ENCODE measurements at regions of chr17 and their contacts with region 1.

Region 1: GRCh38 chr17:18033442-18034099 is 5.4 kb downstream of the ATPAF2 start:
- DNase-seq: peak; percentile 54 to 82
- H3K4me3 ChIP-seq: no peak overlapping the region
- H3K27ac ChIP-seq: no peak overlapping the region
- H3K4me1 ChIP-seq: peaks cover 30% of the 10 kb centered on the region
- H3K27me3 ChIP-seq: no peaks in the 10 kb centered on the region
- CTCF ChIP-seq: peak; percentile 89

Region 2: DNA sequence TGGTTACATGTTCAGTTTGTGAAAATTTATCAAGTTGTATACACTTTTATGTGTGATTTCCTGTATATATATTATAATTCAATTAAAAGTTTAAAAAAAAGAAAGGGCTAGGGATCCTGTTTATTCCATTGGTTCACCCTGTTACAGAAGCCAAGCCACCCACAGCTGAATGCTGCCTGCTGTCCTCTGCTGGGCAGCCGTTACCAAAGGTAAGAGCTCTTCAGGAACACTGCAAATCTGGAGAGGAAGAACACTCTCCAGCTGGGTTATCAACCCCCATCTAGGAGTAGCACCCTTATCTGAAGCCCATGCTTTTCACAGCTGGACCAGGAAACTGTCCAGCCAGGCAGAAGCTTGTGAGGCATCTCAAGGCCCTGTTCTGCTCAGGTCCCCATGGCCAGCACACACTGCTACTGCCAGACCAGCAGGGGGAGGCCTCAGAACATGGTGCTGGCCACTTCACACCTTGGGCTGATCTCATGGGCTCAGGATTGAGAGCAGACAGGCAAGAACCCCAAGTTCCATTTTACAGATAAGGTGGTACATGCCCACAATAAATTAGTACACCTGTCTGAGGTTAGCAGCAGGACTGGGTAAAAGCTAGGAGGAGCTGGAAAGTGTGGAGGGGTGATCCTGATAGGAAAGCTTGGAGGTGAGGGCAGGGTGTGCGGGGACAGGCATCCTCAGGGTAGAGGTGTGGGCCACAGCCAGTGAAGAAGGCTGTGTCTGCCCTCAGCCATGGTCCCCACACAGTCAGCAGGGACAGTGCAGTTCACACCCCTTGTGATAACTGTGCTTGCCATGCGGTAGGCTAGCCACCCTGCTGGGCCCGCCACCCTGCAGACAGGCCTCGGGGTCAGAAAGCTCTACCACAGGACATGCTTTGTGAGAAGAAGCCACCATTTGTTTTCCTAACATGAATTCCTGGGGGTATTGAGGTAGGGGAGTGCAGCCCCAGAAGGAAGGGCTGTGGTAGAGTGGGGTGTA is 142.5 kb before region 1 on chr17:
- CTCF ChIA-PET with region 1: no interaction called
- POLR2A ChIA-PET with region 1: no interaction called
- intact Hi-C with region 1: loop called (anchors 1 kb)
- DNase-seq: peak; percentile 57 to 71
- H3K4me3 ChIP-seq: no peak overlapping the region
- H3K27ac ChIP-seq: no peak overlapping the region
- H3K4me1 ChIP-seq: no peaks in the 10 kb centered on the region
- H3K27me3 ChIP-seq: no peaks in the 10 kb centered on the region
- CTCF ChIP-seq: peak; percentile 93

Region 3: DNA sequence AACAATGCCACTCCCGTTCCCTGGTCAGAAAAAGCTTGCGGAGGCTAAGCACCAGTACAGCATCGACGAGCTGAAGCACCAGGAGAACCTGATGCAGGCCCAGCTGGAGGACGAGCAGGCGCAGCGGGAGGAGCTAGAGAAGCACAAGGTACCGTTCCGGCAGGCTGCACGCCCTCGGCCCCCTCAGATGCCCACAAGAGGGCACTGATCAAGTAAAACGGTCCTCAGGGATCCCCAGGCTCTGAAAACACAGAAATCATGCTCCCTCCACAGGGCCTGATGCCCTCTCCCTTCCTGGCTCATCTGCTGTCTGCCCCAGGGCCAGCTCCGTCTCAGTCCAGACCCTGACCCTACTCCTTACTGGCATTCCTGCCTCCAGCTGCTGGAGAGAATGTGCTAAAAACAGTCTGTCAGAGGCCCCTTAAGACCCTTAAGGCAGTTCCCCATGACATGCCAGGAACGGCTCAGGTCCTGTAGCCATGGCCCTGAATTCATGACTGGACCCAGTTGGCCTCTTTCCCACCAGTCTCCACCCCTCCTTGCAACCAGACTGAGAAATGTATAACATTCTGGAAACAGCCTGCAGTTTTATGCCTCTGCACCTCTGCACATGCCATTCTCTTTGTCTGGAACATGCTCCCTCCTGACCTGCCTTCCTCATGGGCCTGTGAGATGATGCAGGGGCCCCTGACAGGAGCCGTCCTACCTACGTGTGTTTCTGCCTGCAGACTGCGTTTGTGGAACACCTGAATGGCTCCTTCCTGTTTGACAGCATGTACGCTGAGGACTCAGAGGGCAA is 39.1 kb before region 1 on chr17:
- CTCF ChIA-PET with region 1: no interaction called
- POLR2A ChIA-PET with region 1: no interaction called
- intact Hi-C with region 1: loop called (anchors 5 kb)
- DNase-seq: no peak
- H3K4me3 ChIP-seq: no peak overlapping the region
- H3K27ac ChIP-seq: no peak overlapping the region
- H3K4me1 ChIP-seq: peaks cover 22% of the 10 kb centered on the region
- H3K27me3 ChIP-seq: no peaks in the 10 kb centered on the region
- CTCF ChIP-seq: peak; percentile 31; the same call in 1 of the 2 replicates